ENCODE measurements at regions of chr1 and their contacts with region 1.

Region 1: DNA sequence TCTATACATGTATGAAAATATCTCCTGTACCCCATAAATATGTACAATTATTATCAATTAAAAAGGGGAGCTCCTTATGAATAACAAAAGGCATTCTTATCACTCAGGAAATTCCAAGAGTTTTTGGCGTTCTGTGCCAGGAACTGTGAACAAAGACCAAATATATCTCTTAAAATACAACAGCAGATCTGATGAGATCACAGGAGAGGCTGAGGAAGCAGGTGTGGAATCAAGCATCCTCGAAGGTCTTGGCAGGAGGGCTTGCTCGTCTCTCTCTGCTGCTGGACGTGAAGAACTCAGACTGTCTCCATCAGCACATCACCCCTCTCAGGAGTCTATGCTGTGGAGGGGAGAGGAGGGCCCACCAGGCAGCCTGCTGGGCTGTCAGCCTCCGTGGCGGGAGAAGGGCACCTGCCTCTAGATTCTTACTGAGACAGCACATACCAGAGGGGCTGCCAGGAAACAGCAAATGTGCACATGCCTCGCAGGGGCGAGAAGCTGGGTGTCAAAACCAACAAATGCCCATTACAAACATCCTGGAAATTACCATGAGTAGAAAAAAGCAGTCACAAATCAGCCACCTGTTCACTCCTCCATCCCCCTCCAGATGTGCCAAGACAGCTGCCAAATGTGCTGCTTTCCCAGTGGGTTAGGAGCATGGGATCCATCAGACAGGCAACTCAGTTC is 30.8 kb upstream of the FAM89A start:
- DNase-seq: no peak
- H3K4me3 ChIP-seq: no peak overlapping the region
- CTCF ChIP-seq: no peak

Region 2: GRCh38 chr1:230849451-230850224 is 221.3 kb before region 1 on chr1:
- in situ Hi-C with region 1: no loop called
- DNase-seq: peak; percentile 98
- H3K4me3 ChIP-seq: no peak overlapping the region
- CTCF ChIP-seq: no peak

Region 3: DNA sequence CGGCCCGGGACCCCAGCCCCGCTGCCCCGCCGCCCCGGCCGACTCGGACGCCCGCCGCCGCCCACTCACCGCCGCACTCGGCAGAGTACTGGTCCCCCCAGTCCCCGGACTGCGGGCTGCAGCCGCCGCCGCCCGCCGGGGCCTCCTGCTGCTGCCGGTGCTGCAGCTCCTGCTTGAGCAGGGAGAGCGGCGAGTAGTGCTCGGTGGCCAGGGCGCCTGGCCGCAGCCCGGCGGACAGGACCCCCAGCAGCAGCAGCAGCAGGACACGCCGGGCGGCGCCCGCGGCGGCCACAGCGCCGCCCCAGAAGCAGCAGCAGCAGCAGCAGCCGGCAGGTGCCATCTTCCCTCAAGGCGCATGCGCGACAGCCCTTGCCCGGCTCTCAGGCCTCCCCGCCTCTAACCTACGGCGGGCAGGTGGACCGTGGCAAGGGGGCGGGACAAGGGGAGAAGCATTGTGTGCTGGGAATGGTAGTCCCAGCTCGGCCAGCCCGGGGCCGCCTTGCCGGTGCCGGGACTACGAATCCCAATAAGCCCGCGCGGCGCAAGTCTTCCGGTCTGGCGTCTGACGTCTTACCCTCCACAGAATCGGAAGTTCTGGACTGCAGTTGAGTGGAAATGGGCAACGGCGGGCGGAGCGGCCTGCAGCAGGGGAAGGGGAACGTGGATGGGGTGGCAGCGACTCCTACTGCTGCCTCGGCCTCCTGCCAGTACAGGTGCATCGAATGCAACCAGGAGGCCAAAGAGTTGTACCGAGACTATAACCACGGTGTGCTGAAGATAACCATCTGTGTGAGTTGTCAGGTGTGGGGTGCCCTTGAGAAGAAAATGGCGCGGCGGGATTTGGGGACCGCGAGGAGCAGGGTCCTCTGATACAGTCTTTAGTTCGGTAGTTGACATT is 92.2 kb before region 1 on chr1 and contains the starts of genes ARV1 and TTC13:
- in situ Hi-C with region 1: no loop called
- DNase-seq: peak; percentile 96
- H3K4me3 ChIP-seq: peak within 1 kb of the TSS; percentile 67
- CTCF ChIP-seq: no peak

Region 4: GRCh38 chr1:231124746-231125145 is 53.8 kb after region 1 on chr1:
- in situ Hi-C with region 1: loop called (anchors 5 kb)
- DNase-seq: no peak
- H3K4me3 ChIP-seq: no peak overlapping the region
- CTCF ChIP-seq: no peak

Region 5: GRCh38 chr1:231139659-231140654 is 69.1 kb after region 1 on chr1:
- in situ Hi-C with region 1: loop called (anchors 5 kb)
- DNase-seq: peak; percentile 97
- H3K4me3 ChIP-seq: no peak overlapping the region
- CTCF ChIP-seq: no peak